ENCODE measurements at regions of chr16 and their contacts with region 1.

Region 1: DNA sequence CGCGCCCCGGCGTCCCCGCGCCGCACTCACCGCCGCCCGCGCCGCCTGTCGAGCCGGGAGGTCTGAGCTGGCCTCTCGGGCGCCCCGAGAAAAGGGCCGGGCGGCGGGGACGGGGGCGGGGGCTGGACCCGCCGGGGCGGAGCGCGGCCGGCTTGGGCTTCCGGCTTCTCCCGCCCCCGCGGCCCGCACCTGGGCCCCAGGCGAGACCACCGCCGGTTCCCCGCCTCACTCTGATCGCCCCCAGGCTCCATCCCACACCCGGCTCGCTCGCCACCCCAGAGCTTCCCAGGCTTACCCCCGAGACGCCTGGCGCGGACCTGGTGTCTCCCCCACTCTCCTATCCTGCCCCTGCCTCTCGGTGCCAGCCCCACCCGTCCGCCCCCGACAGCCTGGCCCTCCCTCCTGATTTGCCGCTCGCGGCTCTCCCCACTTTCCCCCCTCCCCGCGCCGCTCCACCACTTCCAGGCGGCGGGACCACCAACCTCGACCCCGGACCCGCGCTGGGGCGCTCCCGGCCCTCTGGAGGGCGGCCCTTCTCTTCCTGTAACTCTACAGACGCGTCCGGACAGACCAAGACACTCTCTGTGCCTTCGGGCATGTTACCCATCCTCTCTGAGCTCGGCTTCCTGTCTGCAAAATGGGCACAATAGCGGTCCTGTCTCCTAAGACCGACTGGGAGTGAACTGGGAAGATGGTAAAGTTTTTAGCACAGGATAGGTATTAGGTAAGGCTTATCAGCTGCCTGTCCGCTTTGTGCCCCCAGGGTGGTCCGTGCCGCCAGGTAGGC is at the start of gene LITAF:
- DNase-seq: peak; percentile 40
- H3K4me3 Mint-ChIP-seq: peak within 1 kb of the TSS; percentile 90
- H3K27ac Mint-ChIP-seq: peak within 1 kb of the TSS; percentile 92
- H3K4me1 Mint-ChIP-seq: peaks cover 32% of the 10 kb centered on the region
- H3K27me3 Mint-ChIP-seq: peaks cover 4% of the 10 kb centered on the region
- total RNA-seq, gene LITAF: 121 and 135 TPM in 2 replicates

Region 2: DNA sequence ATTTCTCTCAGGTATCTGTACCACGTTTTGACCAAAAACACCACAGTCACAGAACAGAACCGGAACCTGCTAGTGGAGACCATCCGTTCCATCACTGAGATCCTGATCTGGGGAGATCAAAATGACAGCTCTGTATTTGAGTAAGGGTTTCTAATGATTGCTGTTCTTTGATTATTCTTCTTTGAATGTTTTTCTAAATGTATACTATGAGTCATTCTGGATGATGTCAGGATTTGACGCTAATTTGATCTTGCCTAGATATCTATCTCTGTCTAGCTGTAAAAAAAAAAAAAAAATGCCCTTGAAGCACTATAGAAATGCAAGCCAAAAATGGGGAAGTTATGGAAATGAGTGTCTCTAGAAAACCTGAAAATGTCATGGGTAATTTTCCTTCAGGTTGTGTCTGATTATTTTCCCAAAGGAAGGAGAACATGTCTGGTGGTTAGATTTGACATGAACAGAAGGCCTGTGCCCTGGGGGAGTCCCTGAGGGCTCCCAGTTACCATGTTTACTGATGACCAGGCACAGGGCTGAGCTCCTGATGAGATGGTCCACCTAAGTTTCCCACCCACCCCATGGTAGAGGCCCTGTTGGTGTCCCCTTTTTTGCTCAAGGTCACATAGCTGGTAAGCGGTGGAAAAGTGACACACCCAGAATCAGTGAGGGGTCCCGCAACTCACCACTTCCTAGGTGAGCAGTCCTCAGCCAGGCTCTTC is 629.1 kb before region 1 on chr16:
- intact Hi-C with region 1: loop called (anchors 5 kb)
- DNase-seq: no peak
- H3K4me3 Mint-ChIP-seq: peak overlapping the region; percentile 32
- H3K27ac Mint-ChIP-seq: peak overlapping the region; percentile 87
- H3K4me1 Mint-ChIP-seq: peaks cover 74% of the 10 kb centered on the region
- H3K27me3 Mint-ChIP-seq: no peaks in the 10 kb centered on the region

Region 3: DNA sequence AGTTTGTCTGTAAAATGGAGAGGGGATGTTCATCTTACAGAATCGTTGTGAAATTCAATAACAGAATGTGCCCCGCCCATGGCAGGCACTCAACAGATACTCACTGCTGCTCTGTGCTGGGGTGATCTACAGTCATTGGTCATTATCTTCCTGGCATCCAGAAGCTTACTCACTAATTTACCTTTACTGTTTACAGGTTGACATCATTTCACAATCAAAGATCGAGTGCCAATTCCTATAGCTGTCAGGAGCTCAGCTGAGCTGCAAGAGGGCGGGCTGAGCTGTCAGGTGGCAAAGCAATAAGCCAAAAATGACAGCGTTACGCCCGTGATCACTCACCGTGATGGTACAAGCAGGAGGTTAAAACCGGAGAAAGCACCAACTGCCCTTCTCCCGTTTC is 51.6 kb before region 1 on chr16:
- intact Hi-C with region 1: loop called (anchors 2 kb)
- DNase-seq: no peak
- H3K4me3 Mint-ChIP-seq: no peak overlapping the region
- H3K27ac Mint-ChIP-seq: no peak overlapping the region
- H3K4me1 Mint-ChIP-seq: peaks cover 2% of the 10 kb centered on the region
- H3K27me3 Mint-ChIP-seq: no peaks in the 10 kb centered on the region

Region 4: GRCh38 chr16:11619327-11619851 is 32.3 kb after region 1 on chr16:
- intact Hi-C with region 1: loop called (anchors 2 kb)
- DNase-seq: peak; percentile 36
- H3K4me3 Mint-ChIP-seq: no peak overlapping the region
- H3K27ac Mint-ChIP-seq: peak overlapping the region; percentile 78
- H3K4me1 Mint-ChIP-seq: peaks cover 33% of the 10 kb centered on the region
- H3K27me3 Mint-ChIP-seq: no peaks in the 10 kb centered on the region

Region 5: GRCh38 chr16:11667824-11668622 is 81.0 kb after region 1 on chr16 and contains the start of gene SNN:
- intact Hi-C with region 1: loop called (anchors 5 kb)
- DNase-seq: peak; percentile 82
- H3K4me3 Mint-ChIP-seq: peak within 1 kb of the TSS; percentile 72
- H3K27ac Mint-ChIP-seq: no peak within 1 kb of the TSS
- H3K4me1 Mint-ChIP-seq: peaks cover 58% of the 10 kb centered on the region
- H3K27me3 Mint-ChIP-seq: peaks cover 2% of the 10 kb centered on the region
- total RNA-seq, gene SNN: 8.6 and 9.5 TPM in 2 replicates

Region 6: DNA sequence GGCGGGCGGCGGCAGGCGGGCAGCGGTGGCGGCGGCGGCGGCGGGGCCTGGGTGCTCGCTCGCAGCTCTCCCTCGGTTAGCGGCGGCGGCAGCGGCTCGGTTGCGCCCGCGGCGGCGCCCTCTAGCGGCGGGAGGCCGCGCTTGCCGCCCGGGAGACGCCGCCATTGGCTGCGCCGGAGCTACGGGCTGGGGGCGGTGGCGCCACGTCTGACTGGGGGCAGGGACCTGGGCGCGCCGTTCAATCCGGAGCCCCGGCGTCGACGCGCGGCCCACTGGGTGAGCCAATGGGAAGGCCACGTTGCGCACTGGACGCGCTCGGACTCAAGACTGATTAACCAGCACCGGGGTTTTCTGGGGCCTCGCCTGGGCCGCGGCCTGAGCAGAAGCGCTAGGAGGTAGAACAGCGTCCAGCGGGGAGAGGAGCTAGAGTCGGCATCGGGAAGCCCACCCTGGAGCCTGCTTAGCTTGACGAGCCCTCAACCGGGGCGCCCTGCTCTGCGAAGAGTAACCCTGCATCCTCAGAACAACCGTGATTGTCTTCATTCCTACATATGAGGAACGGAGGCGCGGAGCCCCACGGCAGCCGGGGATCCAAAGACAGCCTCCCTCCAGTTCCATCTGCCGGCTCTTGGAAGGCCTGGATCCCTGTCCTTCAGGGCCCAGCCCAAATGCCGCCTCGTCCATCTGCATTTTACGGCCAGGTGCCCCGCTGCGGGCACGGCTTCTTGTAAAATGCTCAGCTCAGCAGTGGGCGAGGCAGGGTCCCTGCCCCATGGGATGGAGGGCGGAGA is 210.3 kb after region 1 on chr16 and contains the start of gene ZC3H7A:
- intact Hi-C with region 1: loop called (anchors 5 kb)
- DNase-seq: peak; percentile 94
- H3K4me3 Mint-ChIP-seq: peak within 1 kb of the TSS; percentile 93
- H3K27ac Mint-ChIP-seq: peak within 1 kb of the TSS; percentile 96
- H3K4me1 Mint-ChIP-seq: peaks cover 67% of the 10 kb centered on the region
- H3K27me3 Mint-ChIP-seq: no peaks in the 10 kb centered on the region
- total RNA-seq, gene ZC3H7A: 63.4 and 71.1 TPM in 2 replicates

Measured in activated T-helper 2 cell treated with anti-CD3 and anti-CD28 coated beads, Interferon-gamma antibody, Interleukin-2, Interleukin-4, amounts not matched to agents 10 μg/mL and 5 μg/mL and 100 μg/mL, durations not matched to agents 14 hours and 24 hours and 36 hours (primary cell).